Activated T-helper 1 cell treated with anti-CD3 and anti-CD28 coated beads, Interleukin-12 subunit alpha, Interleukin-12 subunit beta, Interleukin-2, Interleukin-4 antibody, amounts not matched to agents 30 ng/mL and 10 ng/mL and 1 ng/mL, durations not matched to agents 14 hours and 24 hours and 36 hours (primary cell): ENCODE measurements at regions of chr5 and their contacts with region 1.

Region 1: DNA sequence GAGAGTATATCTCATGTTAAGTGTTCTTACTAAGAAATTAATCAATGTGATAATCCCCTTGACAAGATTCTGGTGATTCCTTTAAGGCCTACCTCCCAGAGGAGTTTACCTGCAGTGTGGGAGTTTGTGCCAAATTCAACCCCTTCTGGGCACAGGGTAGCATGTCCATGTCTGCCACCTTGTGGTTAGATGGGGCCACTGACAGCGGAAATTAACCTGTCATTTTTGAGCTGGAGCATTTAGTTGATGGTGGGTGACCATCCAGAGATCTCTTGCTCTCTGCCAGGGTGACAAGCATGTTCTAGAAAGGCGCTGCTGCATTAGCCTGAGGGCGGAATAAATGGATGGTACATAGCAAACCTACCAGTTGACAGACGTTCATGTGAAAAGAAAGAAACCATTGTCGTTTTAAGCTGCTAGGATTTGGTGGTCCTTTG is 132.2 kb downstream of the FBXO4 start:
- DNase-seq: peak; percentile 31
- H3K4me3 Mint-ChIP-seq: no peak overlapping the region
- H3K27ac Mint-ChIP-seq: no peak overlapping the region
- H3K4me1 Mint-ChIP-seq: no peaks in the 10 kb centered on the region
- H3K27me3 Mint-ChIP-seq: peaks cover 6% of the 10 kb centered on the region

Region 2: DNA sequence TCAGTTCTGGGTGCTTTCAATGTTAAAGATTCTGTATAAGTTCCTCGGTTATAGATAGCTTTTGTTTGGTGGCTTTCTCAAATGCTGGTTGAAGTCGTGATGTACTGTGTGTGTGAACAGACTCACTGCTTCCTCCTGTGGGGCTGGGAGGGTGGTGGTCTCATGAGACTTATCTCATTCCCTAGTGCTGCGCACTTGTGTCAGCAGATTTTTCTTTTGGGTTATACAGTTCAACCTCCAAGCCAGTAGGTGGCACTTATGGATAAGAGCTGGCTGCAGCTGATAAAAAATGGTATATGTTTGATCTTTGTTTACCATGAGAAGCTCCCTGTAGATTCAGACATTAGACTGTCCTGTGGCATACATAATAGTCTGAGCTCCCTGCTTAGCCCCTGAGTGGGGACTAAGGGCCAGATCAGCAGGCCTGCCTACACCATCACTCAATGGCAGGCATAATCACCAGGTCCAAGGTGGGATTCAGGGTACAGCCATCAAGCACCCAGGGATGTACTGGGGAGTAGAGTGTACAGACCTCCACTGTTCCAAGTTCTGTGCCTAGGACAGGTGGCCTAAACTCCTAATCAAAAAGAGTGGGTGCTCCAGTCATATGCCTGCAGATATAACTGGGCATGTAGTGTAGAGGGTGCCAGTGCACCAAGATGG is 361.2 kb before region 1 on chr5:
- intact Hi-C with region 1: loop called (anchors 5 kb)
- DNase-seq: no peak
- H3K4me3 Mint-ChIP-seq: no peak overlapping the region
- H3K27ac Mint-ChIP-seq: no peak overlapping the region
- H3K4me1 Mint-ChIP-seq: no peaks in the 10 kb centered on the region
- H3K27me3 Mint-ChIP-seq: peaks cover 9% of the 10 kb centered on the region

Region 3: GRCh38 chr5:41924872-41925554 is 132.3 kb before region 1 on chr5 and contains the start of gene FBXO4:
- intact Hi-C with region 1: loop called (anchors 5 kb)
- DNase-seq: peak; percentile 87
- H3K4me3 Mint-ChIP-seq: peak within 1 kb of the TSS; percentile 91
- H3K27ac Mint-ChIP-seq: peak within 1 kb of the TSS; percentile 98
- H3K4me1 Mint-ChIP-seq: peaks cover 13% of the 10 kb centered on the region
- H3K27me3 Mint-ChIP-seq: no peaks in the 10 kb centered on the region
- total RNA-seq, gene FBXO4: 14.1 and 17.8 TPM in 2 replicates

Region 4: GRCh38 chr5:42767491-42768105 is 710.3 kb after region 1 on chr5:
- intact Hi-C with region 1: loop called (anchors 5 kb)
- DNase-seq: no peak
- H3K4me3 Mint-ChIP-seq: no peak overlapping the region
- H3K27ac Mint-ChIP-seq: no peak overlapping the region
- H3K4me1 Mint-ChIP-seq: no peaks in the 10 kb centered on the region
- H3K27me3 Mint-ChIP-seq: peaks cover 10% of the 10 kb centered on the region

Region 5: DNA sequence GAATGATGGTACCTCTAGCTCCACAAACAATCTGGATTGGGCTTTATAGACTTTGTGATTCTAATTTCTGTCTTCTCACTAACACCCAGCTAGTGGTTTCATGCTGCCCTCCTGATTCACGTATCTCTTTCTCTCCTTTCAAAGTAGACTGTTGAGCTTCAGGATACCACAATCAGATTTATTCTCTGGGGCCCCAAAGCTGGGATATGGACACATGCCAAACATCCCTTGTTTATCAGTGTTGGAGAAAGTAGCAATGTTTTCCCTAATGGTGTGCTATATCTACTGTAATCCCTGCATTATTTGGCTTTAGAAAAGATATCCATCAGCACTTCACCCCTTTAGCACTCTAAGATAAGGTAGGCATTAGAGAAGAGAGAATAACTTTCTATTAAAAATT is 1971.0 kb after region 1 on chr5:
- intact Hi-C with region 1: no loop called
- DNase-seq: no peak
- H3K4me3 Mint-ChIP-seq: no peak overlapping the region
- H3K27ac Mint-ChIP-seq: no peak overlapping the region
- H3K4me1 Mint-ChIP-seq: no peaks in the 10 kb centered on the region
- H3K27me3 Mint-ChIP-seq: no peaks in the 10 kb centered on the region